ENCODE measurements at regions of chr16 and their contacts with region 1.

Region 1: GRCh38 chr16:12067714-12068401 is 91.3 kb downstream of the SNX29 start:
- DNase-seq: peak in 1 of 2 donors; percentile 54
- H3K4me3 ChIP-seq: no peak overlapping the region
- CTCF ChIP-seq: peak in 1 of 3 donors; percentile 86
- POLR2A ChIP-seq: no peak

Region 2: DNA sequence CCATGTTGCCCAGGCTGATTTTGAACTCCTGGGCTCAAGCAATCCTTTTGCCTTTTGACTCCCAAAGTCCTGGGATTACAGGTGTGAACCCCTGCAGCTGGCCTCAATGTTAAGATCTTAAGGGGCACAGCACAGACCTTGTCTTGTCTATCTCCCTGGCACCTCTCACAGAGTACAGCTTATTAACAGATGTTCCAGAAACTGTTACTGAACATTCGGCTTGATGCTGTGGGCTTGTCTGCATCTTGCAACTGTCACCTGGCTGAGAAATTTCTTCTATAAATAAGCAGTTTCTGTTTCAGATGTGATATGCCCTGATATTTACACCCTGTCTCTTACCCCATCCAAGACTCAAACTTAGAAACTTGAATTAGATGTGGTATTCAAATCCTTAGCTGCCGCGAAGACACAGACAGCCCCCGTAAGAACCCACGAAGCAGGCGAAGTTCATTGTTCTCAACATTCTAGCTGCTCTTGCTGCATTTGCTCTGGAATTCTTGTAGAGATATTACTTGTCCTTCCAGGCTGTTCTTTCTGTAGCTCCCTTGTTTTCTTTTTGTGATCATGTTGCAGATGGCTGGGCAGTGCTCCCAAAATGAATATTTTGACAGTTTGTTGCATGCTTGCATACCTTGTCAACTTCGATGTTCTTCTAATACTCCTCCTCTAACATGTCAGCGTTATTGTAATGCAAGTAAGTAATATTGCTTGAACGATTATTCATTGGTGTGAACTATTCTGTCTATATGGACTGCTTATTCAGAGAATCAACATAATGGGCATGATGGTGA is 102.9 kb before region 1 on chr16 and contains the start of gene TNFRSF17:
- intact Hi-C with region 1: loop called (anchors 10 kb)
- DNase-seq: no peak
- H3K4me3 ChIP-seq: no peak within 1 kb of the TSS
- CTCF ChIP-seq: no peak
- POLR2A ChIP-seq: no peak
- total RNA-seq, gene TNFRSF17: not detected